ENCODE measurements at regions of chr16 and their contacts with region 1.

Region 1: GRCh38 chr16:89860747-89861304 is 12.6 kb upstream of the TCF25 start:
- DNase-seq: peak; percentile 61 to 67
- H3K4me3 ChIP-seq: no peak overlapping the region
- H3K27ac ChIP-seq: no peak overlapping the region
- H3K4me1 ChIP-seq: peaks cover 0 to 15% of the 10 kb centered on the region in 2 donors
- H3K27me3 ChIP-seq: no peaks in the 10 kb centered on the region
- CTCF ChIP-seq: peak; percentile 90 to 99 (median 94)
- POLR2A ChIP-seq: no peak

Region 2: GRCh38 chr16:89602273-89602951 is 258.4 kb before region 1 on chr16:
- intact Hi-C with region 1: no loop called
- DNase-seq: peak in 1 of 2 donors; percentile 12
- H3K4me3 ChIP-seq: no peak overlapping the region
- H3K27ac ChIP-seq: no peak overlapping the region
- H3K4me1 ChIP-seq: peaks cover 0 to 9% of the 10 kb centered on the region in 2 donors
- H3K27me3 ChIP-seq: no peaks in the 10 kb centered on the region
- CTCF ChIP-seq: no peak
- POLR2A ChIP-seq: no peak

Region 3: GRCh38 chr16:89700100-89700648 is 160.7 kb before region 1 on chr16:
- intact Hi-C with region 1: loop called (anchors 10 kb)
- DNase-seq: peak; percentile 100
- H3K4me3 ChIP-seq: peak overlapping the region in 2 of 3 donors; percentile 66 to 78
- H3K27ac ChIP-seq: peak overlapping the region; percentile 70 to 94 (median 75)
- H3K4me1 ChIP-seq: peaks cover 11 to 20% of the 10 kb centered on the region in 2 donors
- H3K27me3 ChIP-seq: no peaks in the 10 kb centered on the region
- CTCF ChIP-seq: peak; percentile 15 to 98 (median 86)
- POLR2A ChIP-seq: peak; percentile 13 to 75

Region 4: DNA sequence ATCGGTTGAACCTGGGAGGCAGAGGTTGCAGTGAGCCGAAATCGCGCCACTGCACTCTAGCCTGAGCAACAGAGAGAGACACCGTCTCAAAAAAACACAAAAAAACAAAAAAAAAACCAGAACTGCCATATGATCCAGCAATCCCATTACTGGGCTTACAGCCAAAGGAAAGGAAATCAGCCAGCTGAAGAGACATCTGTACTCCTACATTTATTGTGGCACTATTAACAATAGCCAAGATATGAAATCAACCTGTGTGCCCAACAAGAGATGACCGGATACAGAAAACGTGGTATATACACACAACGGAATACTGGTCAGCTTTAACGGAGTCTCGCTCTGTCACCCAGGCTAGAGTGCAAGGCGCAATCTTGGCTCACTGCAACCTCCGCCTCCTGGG is 59.0 kb before region 1 on chr16:
- intact Hi-C with region 1: no loop called
- DNase-seq: no peak
- H3K4me3 ChIP-seq: no peak overlapping the region
- H3K27ac ChIP-seq: no peak overlapping the region
- H3K4me1 ChIP-seq: peaks cover 7 to 21% of the 10 kb centered on the region in 2 donors
- H3K27me3 ChIP-seq: no peaks in the 10 kb centered on the region
- CTCF ChIP-seq: no peak
- POLR2A ChIP-seq: no peak

Region 5: GRCh38 chr16:89815639-89816348 is 45.0 kb before region 1 on chr16:
- intact Hi-C with region 1: loop called (anchors 5 kb)
- DNase-seq: no peak
- H3K4me3 ChIP-seq: peak overlapping the region in 1 of 3 donors; percentile 58
- H3K27ac ChIP-seq: no peak overlapping the region
- H3K4me1 ChIP-seq: peaks cover 23 to 24% of the 10 kb centered on the region in 2 donors
- H3K27me3 ChIP-seq: no peaks in the 10 kb centered on the region
- CTCF ChIP-seq: no peak
- POLR2A ChIP-seq: no peak

Measured in thyroid gland (tissue), 4 donors.